Activated naive CD4-positive, alpha-beta T cell treated with anti-CD3 and anti-CD28 coated beads for 36 hours (primary cell): ENCODE measurements at regions of chr15 and their contacts with region 1.

Region 1: GRCh38 chr15:25863111-25863967 is at the start of gene ATP10A:
- DNase-seq: peak; percentile 68
- H3K4me3 Mint-ChIP-seq: peak within 1 kb of the TSS; percentile 94
- H3K27ac Mint-ChIP-seq: peak within 1 kb of the TSS; percentile 97
- H3K4me1 Mint-ChIP-seq: peaks cover 29% of the 10 kb centered on the region
- H3K27me3 Mint-ChIP-seq: no peaks in the 10 kb centered on the region
- total RNA-seq, gene ATP10A: 11.9 to 13.0 TPM

Region 2: GRCh38 chr15:25596644-25597562 is 266.4 kb before region 1 on chr15:
- CTCF ChIA-PET with region 1: no interaction called
- intact Hi-C with region 1: no loop called
- DNase-seq: no peak
- H3K4me3 Mint-ChIP-seq: no peak overlapping the region
- H3K27ac Mint-ChIP-seq: no peak overlapping the region
- H3K4me1 Mint-ChIP-seq: no peaks in the 10 kb centered on the region
- H3K27me3 Mint-ChIP-seq: peaks cover 3% of the 10 kb centered on the region

Region 3: GRCh38 chr15:25739687-25740121 is 123.6 kb before region 1 on chr15:
- CTCF ChIA-PET with region 1: interaction called, 3 read pairs
- intact Hi-C with region 1: loop called (anchors 5 kb)
- DNase-seq: peak; percentile 66
- H3K4me3 Mint-ChIP-seq: no peak overlapping the region
- H3K27ac Mint-ChIP-seq: no peak overlapping the region
- H3K4me1 Mint-ChIP-seq: peaks cover 19% of the 10 kb centered on the region
- H3K27me3 Mint-ChIP-seq: no peaks in the 10 kb centered on the region

Region 4: DNA sequence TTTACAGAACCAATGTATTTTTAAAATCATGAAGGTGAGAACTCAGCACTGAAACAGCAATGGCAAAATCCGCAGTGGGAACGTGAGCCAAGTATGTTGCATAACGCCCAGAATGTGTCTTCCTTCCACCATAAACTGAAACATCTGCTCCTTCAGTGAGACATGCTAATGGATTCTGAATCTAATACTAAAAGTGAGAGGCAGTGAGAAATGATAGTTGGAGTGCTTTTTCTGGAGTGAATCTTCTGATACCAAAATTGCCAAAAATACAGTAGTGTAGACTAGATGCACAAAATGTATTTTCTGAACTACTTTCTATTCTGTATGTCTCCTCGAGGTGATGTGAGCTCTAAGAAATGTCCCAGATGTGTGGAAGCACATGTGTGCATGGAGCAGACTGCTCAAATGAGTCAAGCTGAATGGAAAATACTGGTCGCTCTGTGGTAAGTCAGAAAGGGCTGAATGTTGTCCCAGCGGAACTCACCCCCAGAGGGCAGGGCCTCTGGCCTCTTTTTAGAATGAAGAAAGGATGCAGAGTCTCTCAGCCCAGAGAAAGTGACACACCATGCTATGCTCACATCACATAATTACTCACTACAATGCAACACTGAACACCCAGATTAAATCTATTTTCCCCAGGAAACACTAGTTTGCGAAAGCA is 73.2 kb before region 1 on chr15:
- CTCF ChIA-PET with region 1: interaction called, 3 read pairs
- intact Hi-C with region 1: loop called (anchors 1 kb)
- DNase-seq: peak; percentile 76
- H3K4me3 Mint-ChIP-seq: peak overlapping the region; percentile 20
- H3K27ac Mint-ChIP-seq: peak overlapping the region; percentile 85
- H3K4me1 Mint-ChIP-seq: peaks cover 66% of the 10 kb centered on the region
- H3K27me3 Mint-ChIP-seq: no peaks in the 10 kb centered on the region

Region 5: GRCh38 chr15:25830844-25831451 is 32.4 kb before region 1 on chr15:
- CTCF ChIA-PET with region 1: no interaction called
- intact Hi-C with region 1: loop called (anchors 1 kb)
- DNase-seq: no peak
- H3K4me3 Mint-ChIP-seq: no peak overlapping the region
- H3K27ac Mint-ChIP-seq: no peak overlapping the region
- H3K4me1 Mint-ChIP-seq: peaks cover 37% of the 10 kb centered on the region
- H3K27me3 Mint-ChIP-seq: no peaks in the 10 kb centered on the region

Region 6: DNA sequence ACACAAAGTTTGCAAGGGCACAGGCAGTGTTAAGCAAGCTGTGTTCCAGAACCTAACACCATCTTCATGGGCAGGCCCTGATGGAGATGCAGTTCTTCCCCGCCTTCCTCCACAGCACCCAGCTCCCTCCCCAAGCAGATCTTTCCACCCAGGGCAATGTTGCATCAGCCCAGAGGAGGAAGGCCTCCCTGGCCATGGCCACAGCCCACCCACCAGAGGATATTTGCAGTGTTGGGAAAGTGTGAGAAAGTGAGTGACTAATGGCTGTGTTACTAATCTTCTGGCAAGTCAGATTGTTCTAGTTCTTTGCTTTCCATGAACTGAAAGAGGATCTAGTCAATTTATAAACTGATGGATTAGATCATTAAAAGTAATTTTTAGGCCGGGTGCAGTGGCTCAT is 41.8 kb after region 1 on chr15:
- CTCF ChIA-PET with region 1: no interaction called
- intact Hi-C with region 1: loop called (anchors 2 kb)
- DNase-seq: peak; percentile 56
- H3K4me3 Mint-ChIP-seq: no peak overlapping the region
- H3K27ac Mint-ChIP-seq: peak overlapping the region; percentile 22
- H3K4me1 Mint-ChIP-seq: peaks cover 16% of the 10 kb centered on the region
- H3K27me3 Mint-ChIP-seq: no peaks in the 10 kb centered on the region